ENCODE measurements at regions of chr14 and their contacts with region 1.

Region 1: GRCh38 chr14:49971156-49972130 is 78.6 kb downstream of the ARF6 start:
- DNase-seq: peak; percentile 78
- H3K4me3 Mint-ChIP-seq: peak overlapping the region; percentile 62
- H3K27ac Mint-ChIP-seq: peak overlapping the region; percentile 95
- H3K4me1 Mint-ChIP-seq: peaks cover 61% of the 10 kb centered on the region
- H3K27me3 Mint-ChIP-seq: no peaks in the 10 kb centered on the region

Region 2: DNA sequence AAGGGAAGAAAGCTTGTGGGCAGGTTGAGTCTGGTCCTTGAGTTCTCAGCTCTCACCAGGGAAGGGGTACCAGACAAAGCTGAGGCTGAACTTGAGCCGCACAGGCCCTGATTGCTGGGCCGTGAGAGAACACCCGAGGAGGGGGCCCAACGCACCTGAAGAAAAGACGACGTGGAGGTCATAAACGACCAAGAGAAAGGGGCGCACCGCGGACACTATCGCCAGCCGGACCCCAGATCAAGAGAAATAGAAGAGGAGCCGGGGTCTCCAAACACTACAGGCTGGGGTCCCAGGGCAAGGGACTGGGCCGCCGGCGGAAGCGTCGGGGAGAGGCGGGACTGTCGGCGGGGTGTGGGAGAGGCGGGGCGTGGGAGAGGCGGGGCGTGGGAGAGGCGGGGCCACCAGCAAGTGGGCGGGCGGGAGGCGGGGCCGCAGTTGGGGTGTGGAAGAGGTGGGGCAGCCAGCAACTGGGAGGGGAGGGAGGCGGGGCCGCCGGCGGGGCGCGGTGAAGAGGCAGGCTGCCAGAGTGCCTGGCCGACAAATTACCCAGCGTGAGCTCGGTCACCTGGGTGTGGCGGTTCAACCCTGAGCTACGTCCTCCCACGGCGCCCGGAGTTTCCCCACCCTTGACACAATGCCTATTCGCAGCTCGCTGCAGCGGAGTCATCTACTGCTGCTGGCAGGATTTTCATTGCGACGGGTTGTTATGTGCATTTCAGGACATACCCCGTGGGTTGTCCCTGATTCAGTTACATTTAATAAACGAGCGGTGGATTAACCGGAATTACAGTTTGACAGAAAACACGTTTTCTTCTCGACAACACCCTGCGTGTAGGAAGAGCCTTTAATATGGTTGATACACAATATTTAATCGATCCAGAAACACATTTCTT is 103.4 kb before region 1 on chr14:
- CTCF ChIA-PET with region 1: interaction called, 6 read pairs
- POLR2A ChIA-PET with region 1: interaction called, 9 read pairs
- intact Hi-C with region 1: loop called (anchors 1 kb)
- DNase-seq: peak; percentile 99
- H3K4me3 Mint-ChIP-seq: peak overlapping the region; percentile 94
- H3K27ac Mint-ChIP-seq: peak overlapping the region; percentile 85
- H3K4me1 Mint-ChIP-seq: peaks cover 25% of the 10 kb centered on the region
- H3K27me3 Mint-ChIP-seq: no peaks in the 10 kb centered on the region

Region 3: DNA sequence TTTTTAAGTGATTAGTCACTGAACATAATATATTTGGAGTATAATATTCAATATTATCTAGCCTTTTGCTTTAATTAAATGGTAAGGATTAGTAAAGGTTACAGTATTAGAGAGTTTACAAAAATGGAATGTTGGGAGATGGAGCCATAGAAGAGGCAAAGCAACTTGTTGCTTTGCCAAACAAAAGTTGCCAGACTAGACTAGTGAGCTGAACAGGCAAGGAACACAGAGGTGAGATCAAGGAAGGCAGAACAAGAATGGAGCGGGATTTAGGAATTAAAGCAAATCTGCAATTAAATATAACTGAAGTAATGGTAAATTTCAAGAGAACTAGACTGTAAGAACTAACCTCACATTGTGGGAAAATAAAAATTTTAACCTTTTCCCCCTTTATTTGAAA is 73.5 kb before region 1 on chr14:
- CTCF ChIA-PET with region 1: interaction called, 14 read pairs
- POLR2A ChIA-PET with region 1: interaction called, 47 read pairs
- intact Hi-C with region 1: loop called (anchors 1 kb)
- DNase-seq: no peak
- H3K4me3 Mint-ChIP-seq: peak overlapping the region; percentile 75
- H3K27ac Mint-ChIP-seq: peak overlapping the region; percentile 93
- H3K4me1 Mint-ChIP-seq: peaks cover 29% of the 10 kb centered on the region
- H3K27me3 Mint-ChIP-seq: no peaks in the 10 kb centered on the region

Region 4: DNA sequence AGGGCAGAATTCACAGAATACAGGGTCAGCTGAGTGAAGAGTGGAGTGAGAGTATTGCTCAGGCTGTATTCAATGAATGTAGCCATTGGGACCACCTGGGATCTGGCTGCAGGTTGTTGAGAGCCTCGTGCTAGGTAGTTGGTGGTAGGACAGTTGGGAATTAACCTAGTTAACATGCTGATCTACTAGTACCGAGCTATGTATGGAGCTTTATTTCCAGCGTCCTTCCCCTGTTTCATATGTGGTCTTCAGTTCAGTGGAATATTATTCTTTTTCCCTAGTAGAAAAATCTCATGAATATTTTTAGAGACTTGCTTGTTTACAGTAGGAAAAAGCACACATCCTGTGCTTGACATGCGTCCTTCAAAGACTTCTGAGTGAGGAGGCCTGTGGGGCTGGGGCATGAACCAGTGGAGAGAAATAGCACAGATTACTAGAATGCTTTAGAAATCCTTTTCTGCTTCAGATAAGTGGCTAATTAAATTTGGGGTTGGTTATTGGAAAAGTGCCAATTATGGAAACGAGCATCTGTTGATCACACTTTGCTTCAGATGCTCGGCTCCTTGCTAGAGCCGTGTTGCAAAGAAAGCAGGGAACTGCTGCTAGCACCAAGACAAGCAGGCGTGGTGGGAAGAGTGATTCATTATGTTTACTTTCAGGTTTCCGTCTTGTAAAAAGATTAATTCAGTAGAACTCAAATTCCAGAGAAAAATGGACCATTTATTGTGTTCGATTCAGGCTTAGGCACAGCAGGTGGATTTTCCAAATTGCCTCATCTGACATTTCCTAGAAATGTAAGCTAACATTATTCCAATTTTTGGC is 24.9 kb before region 1 on chr14:
- CTCF ChIA-PET with region 1: interaction called, 5 read pairs
- POLR2A ChIA-PET with region 1: interaction called, 33 read pairs
- intact Hi-C with region 1: loop called (anchors 1 kb)
- DNase-seq: peak; percentile 51
- H3K4me3 Mint-ChIP-seq: peak overlapping the region; percentile 24
- H3K27ac Mint-ChIP-seq: peak overlapping the region; percentile 83
- H3K4me1 Mint-ChIP-seq: peaks cover 72% of the 10 kb centered on the region
- H3K27me3 Mint-ChIP-seq: no peaks in the 10 kb centered on the region

Region 5: DNA sequence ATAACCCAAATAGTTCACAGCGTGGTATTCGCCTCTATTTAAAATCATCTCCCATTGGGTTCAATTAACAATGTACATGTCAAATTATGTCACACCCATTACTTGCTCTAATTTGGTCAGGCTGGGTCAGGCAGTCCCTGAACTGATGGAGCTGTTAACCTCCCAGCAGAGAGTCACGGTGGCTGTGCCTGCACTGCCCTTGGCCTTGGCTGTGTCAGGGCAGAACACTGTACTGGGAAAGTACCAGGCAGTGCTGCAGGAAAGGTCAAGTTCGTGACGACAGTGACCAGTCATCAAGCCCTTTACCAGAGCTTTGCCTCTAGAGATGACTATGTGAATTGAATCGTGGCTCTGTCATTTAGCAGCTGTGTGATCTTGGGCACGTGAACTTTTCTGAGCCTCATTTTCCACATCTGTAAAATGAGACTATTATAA is 21.5 kb after region 1 on chr14:
- CTCF ChIA-PET with region 1: interaction called, 5 read pairs
- POLR2A ChIA-PET with region 1: interaction called, 20 read pairs
- intact Hi-C with region 1: no loop called
- DNase-seq: peak; percentile 81
- H3K4me3 Mint-ChIP-seq: peak overlapping the region; percentile 65
- H3K27ac Mint-ChIP-seq: peak overlapping the region; percentile 80
- H3K4me1 Mint-ChIP-seq: peaks cover 34% of the 10 kb centered on the region
- H3K27me3 Mint-ChIP-seq: no peaks in the 10 kb centered on the region

Region 6: GRCh38 chr14:50520947-50521815 is 549.7 kb after region 1 on chr14:
- CTCF ChIA-PET with region 1: no interaction called
- POLR2A ChIA-PET with region 1: interaction called, 3 read pairs
- intact Hi-C with region 1: loop called (anchors 5 kb)
- DNase-seq: peak; percentile 84
- H3K4me3 Mint-ChIP-seq: peak overlapping the region; percentile 25
- H3K27ac Mint-ChIP-seq: peak overlapping the region; percentile 85
- H3K4me1 Mint-ChIP-seq: peaks cover 56% of the 10 kb centered on the region
- H3K27me3 Mint-ChIP-seq: no peaks in the 10 kb centered on the region